Calu3 (cell line): ENCODE measurements at regions of chr20 and their contacts with region 1.

Region 1: DNA sequence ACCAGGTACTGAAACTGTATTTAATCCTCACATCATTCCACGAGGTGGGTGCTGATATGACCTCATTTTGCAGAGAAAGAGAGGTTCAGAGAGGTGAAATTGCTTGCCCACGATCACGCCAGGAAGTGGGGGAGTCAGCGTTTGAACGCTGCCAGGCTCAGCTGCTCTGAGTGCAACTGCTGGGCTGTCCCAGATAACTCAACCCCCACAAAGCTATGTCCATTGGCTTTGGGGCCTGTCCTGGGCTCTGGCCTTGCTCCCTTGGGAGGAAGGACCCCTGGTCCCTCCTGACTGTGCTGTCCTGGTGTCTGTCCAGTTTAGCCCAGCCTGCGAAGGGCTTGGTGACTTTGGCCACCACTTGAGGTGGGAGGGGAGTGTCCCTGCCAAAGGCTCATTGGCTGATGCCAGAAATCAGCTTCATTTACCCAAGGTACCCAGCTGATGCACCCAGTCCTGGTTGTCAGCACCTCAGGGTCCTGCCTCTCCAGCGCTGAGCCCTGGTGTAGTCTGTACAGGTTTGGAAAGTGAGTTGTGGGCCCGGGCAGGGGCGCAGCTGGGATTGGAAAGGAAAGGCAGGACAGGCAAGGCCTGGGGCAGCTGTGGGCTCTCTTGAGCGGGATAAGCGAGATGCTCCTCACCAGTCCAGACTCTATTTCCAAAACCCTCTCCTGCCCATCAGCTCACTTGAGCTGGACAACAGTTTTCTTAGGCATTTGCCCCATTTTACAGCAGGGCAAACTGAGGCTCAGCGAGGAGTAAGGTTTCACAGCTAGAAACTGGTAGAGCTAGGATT is 38.5 kb downstream of the SUN5 start:
- DNase-seq: no peak
- H3K4me3 Mint-ChIP-seq: no peak overlapping the region
- H3K27ac Mint-ChIP-seq: no peak overlapping the region
- H3K4me1 Mint-ChIP-seq: no peaks in the 10 kb centered on the region
- H3K27me3 Mint-ChIP-seq: peaks cover 82% of the 10 kb centered on the region
- CTCF ChIP-seq: no peak

Region 2: DNA sequence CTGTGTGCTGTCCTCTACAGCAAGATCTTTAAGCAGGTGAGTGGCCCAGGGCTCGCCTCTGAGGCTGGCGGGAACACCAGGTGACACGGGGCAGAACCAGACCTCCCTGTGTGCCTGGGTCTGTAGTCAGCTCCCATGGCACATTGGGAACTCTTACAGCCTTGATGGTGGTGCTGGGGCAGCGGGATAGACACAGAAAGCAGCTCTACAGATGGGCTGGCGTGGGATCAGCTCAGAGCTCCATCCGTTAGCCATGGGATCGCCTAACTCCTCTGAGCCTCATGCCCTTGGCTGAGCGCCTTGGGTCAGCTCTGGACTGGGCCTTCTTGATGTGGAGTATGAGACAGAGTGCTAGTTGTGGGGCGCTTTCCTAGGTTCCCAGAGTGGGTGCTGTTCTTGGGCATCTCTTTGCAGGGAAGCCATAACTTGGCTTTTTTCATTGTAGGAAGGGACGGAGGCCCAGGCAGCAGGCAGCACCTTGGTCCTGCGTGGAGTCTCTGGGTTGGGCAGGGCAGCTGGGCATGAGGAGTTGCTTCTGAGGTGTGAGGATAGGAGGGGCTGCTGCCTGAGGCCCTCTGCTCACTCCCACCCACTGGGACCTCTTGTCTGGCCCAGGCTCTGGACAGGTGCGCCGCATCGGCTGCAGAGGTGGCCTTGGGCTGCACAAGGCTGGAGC is 55.7 kb before region 1 on chr20:
- CTCF ChIA-PET with region 1: interaction called, 13 read pairs
- intact Hi-C with region 1: no loop called
- DNase-seq: no peak
- H3K4me3 Mint-ChIP-seq: no peak overlapping the region
- H3K27ac Mint-ChIP-seq: no peak overlapping the region
- H3K4me1 Mint-ChIP-seq: no peaks in the 10 kb centered on the region
- H3K27me3 Mint-ChIP-seq: peaks cover 49% of the 10 kb centered on the region
- CTCF ChIP-seq: no peak

Region 3: DNA sequence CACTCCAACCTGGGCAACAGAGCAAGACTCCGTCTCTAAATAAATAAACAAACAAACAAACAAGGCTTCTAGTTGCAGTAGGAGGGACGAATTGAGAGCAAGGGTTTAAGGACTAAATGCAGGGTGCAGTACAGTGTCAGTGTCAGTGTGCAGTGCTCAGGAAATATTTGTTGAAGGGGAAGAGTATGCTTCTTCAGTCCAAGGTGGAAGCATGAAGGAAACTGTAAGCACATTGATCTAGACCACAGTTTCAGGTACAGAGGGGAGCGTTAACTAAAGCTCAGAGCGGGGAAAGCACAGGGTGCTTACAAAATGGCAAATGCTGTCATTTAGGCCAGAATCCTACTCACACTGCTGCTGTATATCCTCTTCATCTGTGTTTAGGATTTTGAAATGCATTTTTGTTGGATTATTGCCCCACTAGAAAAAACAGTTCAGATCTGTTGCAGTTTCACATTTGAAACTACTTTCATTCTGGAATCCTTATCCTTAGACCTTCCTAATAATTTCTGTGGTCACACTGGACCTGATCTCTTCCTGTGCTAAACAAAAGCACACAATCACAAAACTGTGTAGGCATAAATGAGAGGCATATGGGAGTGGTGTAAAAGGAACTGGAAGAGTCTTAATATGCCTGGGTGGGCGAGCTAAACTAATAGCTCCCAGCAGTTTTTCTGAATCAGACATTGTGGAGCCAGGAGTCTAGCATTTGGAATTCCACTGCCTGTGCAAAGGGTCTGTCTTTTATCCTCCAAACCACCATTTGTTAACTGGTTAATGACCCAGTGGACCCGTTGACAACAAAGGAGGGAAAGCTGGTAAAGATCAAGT is 565.5 kb after region 1 on chr20:
- CTCF ChIA-PET with region 1: no interaction called
- intact Hi-C with region 1: no loop called
- DNase-seq: no peak
- H3K4me3 Mint-ChIP-seq: no peak overlapping the region
- H3K27ac Mint-ChIP-seq: no peak overlapping the region
- H3K4me1 Mint-ChIP-seq: peaks cover 6% of the 10 kb centered on the region
- H3K27me3 Mint-ChIP-seq: no peaks in the 10 kb centered on the region
- CTCF ChIP-seq: no peak